ENCODE measurements at regions of chr5 and their contacts with region 1.

Region 1: DNA sequence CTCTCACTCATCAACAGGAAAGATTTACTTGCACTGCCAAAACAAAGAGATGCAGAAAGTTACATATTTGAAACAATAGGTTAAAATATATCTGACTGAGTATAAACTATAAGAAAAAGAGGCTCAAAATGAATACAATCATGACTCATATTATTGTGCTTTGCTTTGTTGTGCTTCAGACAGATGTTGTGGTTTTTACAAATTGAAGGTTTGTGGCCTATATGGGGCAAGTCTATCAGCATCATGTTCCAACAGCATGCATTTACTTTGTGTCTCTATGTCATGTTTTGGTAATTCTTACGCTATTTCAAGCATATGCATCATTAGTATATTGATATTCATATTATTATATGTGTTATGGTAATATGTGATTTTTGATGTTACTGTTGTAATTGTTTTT is 330.0 kb downstream of the PRR16 start:
- DNase-seq: no peak
- H3K4me3 ChIP-seq: no peak overlapping the region
- H3K27ac ChIP-seq: no peak overlapping the region
- H3K4me1 ChIP-seq: no peaks in the 10 kb centered on the region
- H3K27me3 ChIP-seq: no peaks in the 10 kb centered on the region
- CTCF ChIP-seq: no peak
- EP300 ChIP-seq: no peak
- POLR2A ChIP-seq: no peak

Region 2: GRCh38 chr5:119031905-119032304 is 1762.2 kb before region 1 on chr5:
- intact Hi-C with region 1: loop called in 1 of 4 experiments (anchors 10 kb)
- DNase-seq: no peak
- H3K4me3 ChIP-seq: no peak overlapping the region
- H3K27ac ChIP-seq: no peak overlapping the region
- H3K4me1 ChIP-seq: no peaks in the 10 kb centered on the region
- H3K27me3 ChIP-seq: no peaks in the 10 kb centered on the region
- CTCF ChIP-seq: no peak
- EP300 ChIP-seq: no peak
- POLR2A ChIP-seq: no peak

Measured in ovary (tissue), 10 donors.